Activated CD4-positive, alpha-beta memory T cell treated with anti-CD3 and anti-CD28 coated beads, Interleukin-2, amount 10 ng/mL, durations not matched to agents 7 days and 5 days (primary cell): ENCODE measurements at regions of chr19 and their contacts with region 1.

Region 1: DNA sequence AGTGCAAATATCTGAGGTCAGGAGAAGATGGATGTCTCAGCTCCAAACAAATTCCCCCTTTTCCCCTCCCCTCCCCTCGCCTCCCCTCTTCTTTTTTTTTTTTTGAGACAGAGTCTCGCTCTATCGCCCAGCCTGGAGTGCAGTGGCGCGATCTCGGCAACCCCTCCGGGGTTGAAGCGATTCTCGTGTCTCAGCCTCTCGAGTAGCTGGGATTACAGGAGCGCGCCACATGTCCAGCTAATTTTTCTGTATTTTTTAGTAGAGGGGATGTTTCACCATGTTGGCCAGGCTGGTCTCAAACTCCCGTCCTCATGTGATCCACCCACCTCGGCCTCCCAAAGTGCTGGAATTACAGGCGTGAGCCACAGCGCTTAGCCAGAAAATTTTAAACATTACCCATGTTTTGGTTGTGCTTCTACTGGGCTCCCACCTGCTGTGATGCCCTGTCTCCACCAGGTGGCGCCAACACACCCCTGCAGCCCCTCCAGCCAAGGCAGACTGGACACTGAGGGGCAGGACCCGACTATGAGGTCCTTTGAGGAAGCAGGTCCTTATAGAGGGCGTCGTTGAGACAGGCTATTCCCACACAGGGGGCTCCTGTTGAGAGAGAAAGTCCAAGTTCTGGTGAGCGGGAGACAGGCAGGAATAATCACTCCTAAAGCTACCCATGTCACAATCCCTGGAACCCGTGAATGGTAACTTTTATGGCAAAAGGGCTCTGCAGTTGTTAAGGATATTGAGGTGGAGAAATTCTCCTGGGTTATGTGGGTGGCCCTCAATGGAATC is 6.3 kb downstream of the ERICH4 start:
- DNase-seq: peak; percentile 76
- H3K4me3 Mint-ChIP-seq: peak overlapping the region; percentile 61
- H3K27ac Mint-ChIP-seq: peak overlapping the region; percentile 18
- H3K4me1 Mint-ChIP-seq: peaks cover 29% of the 10 kb centered on the region
- H3K27me3 Mint-ChIP-seq: peaks cover 7% of the 10 kb centered on the region

Region 2: GRCh38 chr19:41531438-41532311 is 82.4 kb after region 1 on chr19:
- CTCF ChIA-PET with region 1: interaction called, 52 read pairs
- POLR2A ChIA-PET with region 1: interaction called, 5 read pairs
- DNase-seq: peak; percentile 86
- H3K4me3 Mint-ChIP-seq: peak overlapping the region; percentile 68
- H3K27ac Mint-ChIP-seq: peak overlapping the region; percentile 71
- H3K4me1 Mint-ChIP-seq: peaks cover 69% of the 10 kb centered on the region
- H3K27me3 Mint-ChIP-seq: peaks cover 17% of the 10 kb centered on the region

Region 3: GRCh38 chr19:41548954-41549688 is 99.8 kb after region 1 on chr19:
- CTCF ChIA-PET with region 1: interaction called, 19 read pairs
- POLR2A ChIA-PET with region 1: interaction called, 11 read pairs
- DNase-seq: peak; percentile 88
- H3K4me3 Mint-ChIP-seq: peak overlapping the region; percentile 99
- H3K27ac Mint-ChIP-seq: peak overlapping the region; percentile 99
- H3K4me1 Mint-ChIP-seq: peaks cover 62% of the 10 kb centered on the region
- H3K27me3 Mint-ChIP-seq: no peaks in the 10 kb centered on the region

Region 4: DNA sequence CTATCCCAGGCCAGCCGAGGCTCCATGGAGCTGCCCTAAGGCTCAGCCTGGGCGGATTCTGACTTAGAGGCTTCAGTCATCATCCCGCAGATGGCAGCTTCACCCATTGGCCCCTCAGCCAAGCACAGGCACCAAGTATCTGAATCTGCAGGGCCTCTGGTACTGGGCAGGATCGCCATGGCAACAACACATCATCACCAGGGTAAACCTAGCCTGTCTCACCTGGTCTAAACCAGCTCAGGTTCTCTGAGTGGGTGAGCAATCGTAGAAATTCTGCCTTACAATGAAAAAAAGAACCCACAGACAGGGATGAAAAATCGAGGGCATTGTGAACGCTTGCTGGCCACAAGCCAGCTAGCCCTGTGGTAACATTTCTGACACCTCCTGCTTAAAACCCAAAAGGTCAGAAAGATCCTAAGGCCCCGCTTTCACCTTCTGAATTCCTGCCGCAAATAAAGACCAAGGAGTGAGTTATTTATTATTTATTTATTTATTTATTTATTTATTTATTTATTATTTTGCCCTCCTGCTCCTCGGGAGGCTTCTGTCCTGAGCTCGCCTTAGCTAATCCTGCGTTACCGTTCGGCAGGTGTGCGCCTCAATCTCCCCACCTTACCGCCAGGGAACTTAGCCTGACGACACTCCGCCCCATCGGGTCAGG is 114.7 kb after region 1 on chr19:
- CTCF ChIA-PET with region 1: interaction called, 91 read pairs
- POLR2A ChIA-PET with region 1: interaction called, 3 read pairs
- DNase-seq: peak; percentile 46
- H3K4me3 Mint-ChIP-seq: no peak overlapping the region
- H3K27ac Mint-ChIP-seq: no peak overlapping the region
- H3K4me1 Mint-ChIP-seq: peaks cover 64% of the 10 kb centered on the region
- H3K27me3 Mint-ChIP-seq: no peaks in the 10 kb centered on the region

Region 5: DNA sequence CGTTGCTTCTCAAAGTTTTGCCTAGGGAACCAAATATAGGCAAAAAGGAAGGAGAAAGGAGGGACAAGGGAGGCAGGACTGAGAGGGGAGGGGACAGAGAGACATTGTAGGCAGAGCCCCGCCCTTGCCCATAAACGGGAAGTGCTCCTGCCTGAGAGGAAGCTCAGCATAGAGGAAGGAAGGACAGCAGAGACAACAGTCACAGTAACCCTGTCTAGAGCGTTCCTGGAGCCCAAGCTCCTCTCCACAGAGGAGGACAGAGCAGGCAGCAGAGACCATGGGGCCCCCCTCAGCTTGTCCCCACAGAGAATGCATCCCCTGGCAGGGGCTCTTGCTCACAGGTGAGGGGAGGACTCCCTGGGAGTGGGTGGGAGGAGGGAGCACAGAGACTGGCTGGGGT is 126.7 kb after region 1 on chr19 and contains the start of gene CEACAM21:
- CTCF ChIA-PET with region 1: interaction called, 91 read pairs
- POLR2A ChIA-PET with region 1: interaction called, 4 read pairs
- DNase-seq: peak; percentile 74
- H3K4me3 Mint-ChIP-seq: peak within 1 kb of the TSS; percentile 75
- H3K27ac Mint-ChIP-seq: peak within 1 kb of the TSS; percentile 77
- H3K4me1 Mint-ChIP-seq: peaks cover 30% of the 10 kb centered on the region
- H3K27me3 Mint-ChIP-seq: no peaks in the 10 kb centered on the region
- total RNA-seq, gene CEACAM21: 77.0 to 77.8 TPM